ENCODE measurements at regions of chr2 and their contacts with region 1.

Region 1: GRCh38 chr2:25276569-25277465 is 64.9 kb downstream of the DNMT3A start:
- DNase-seq: peak; percentile 56 to 87 (median 68)
- ATAC-seq: peak; percentile 25
- H3K4me3 ChIP-seq: peak overlapping the region; percentile 50
- H3K4me3 Mint-ChIP-seq: peak overlapping the region; percentile 73
- H3K27ac ChIP-seq: peak overlapping the region; percentile 88 to 95
- H3K27ac Mint-ChIP-seq: peak overlapping the region; percentile 97
- H3K4me1 ChIP-seq: peaks cover 90% of the 10 kb centered on the region
- H3K4me1 Mint-ChIP-seq: peaks cover 72% of the 10 kb centered on the region
- H3K27me3 ChIP-seq: no peaks in the 10 kb centered on the region
- H3K27me3 Mint-ChIP-seq: no peaks in the 10 kb centered on the region
- CTCF ChIP-seq: peak; percentile 86

Region 2: DNA sequence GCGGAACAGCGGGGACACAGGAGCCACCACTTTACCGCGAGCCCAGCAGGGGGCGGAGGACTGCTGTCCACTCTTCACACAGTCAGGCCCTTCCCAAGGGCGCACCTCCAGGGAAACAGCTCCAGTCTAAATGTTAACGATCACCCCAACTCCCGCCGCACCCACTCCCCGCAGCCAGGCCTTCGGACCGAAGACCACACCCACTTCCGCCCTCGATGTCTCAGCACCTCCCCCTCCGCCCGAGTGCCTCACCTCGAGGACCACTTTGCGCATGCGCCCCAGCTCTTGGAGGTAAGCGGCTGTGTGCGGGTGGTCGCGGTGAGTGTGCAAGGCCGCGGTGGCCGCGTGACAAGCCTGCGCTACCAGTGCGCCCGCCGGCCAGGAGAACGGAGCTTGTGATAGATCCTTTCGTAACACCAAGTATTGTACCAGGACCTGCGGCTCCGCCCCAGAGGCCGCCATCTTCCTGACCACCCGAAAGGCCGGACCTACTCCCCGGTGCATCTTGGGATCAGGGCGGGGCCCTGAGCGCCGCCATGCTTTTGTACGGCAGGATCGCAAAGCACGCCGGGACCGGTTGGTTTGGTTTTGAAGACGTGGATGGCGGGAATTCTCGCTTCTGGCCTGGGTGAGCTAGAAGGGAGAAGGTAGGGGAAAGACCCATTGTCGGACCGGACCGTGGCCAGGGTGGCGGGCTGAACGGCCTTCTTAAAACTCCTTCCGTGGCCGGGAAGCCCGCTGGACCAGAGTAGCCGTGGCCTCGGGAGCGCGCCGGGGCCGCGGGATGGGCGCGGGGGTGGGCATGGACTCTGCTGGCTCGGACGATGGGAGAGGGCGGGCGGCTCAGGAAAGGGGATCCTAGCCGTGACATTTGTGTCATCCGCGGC is 483.7 kb before region 1 on chr2 and contains the starts of genes CENPO and PTRHD1:
- CTCF ChIA-PET with region 1: no interaction called
- POLR2A ChIA-PET with region 1: interaction called, 3 read pairs
- intact Hi-C with region 1: loop called in 1 of 2 experiments (anchors 5 kb)
- DNase-seq: peak; percentile 91 to 97 (median 93)
- ATAC-seq: peak; percentile 96
- H3K4me3 ChIP-seq: peak within 1 kb of the TSS; percentile 88
- H3K4me3 Mint-ChIP-seq: peak within 1 kb of the TSS; percentile 97
- H3K27ac ChIP-seq: peak within 1 kb of the TSS; percentile 95 to 97
- H3K27ac Mint-ChIP-seq: peak within 1 kb of the TSS; percentile 99
- H3K4me1 ChIP-seq: peaks cover 13% of the 10 kb centered on the region
- H3K4me1 Mint-ChIP-seq: peaks cover 21% of the 10 kb centered on the region
- H3K27me3 ChIP-seq: no peaks in the 10 kb centered on the region
- H3K27me3 Mint-ChIP-seq: no peaks in the 10 kb centered on the region
- CTCF ChIP-seq: peak; percentile 60
- total RNA-seq, gene CENPO: 3.4 to 3.5 TPM
- total RNA-seq, gene PTRHD1: 15.3 to 15.7 TPM

Region 3: DNA sequence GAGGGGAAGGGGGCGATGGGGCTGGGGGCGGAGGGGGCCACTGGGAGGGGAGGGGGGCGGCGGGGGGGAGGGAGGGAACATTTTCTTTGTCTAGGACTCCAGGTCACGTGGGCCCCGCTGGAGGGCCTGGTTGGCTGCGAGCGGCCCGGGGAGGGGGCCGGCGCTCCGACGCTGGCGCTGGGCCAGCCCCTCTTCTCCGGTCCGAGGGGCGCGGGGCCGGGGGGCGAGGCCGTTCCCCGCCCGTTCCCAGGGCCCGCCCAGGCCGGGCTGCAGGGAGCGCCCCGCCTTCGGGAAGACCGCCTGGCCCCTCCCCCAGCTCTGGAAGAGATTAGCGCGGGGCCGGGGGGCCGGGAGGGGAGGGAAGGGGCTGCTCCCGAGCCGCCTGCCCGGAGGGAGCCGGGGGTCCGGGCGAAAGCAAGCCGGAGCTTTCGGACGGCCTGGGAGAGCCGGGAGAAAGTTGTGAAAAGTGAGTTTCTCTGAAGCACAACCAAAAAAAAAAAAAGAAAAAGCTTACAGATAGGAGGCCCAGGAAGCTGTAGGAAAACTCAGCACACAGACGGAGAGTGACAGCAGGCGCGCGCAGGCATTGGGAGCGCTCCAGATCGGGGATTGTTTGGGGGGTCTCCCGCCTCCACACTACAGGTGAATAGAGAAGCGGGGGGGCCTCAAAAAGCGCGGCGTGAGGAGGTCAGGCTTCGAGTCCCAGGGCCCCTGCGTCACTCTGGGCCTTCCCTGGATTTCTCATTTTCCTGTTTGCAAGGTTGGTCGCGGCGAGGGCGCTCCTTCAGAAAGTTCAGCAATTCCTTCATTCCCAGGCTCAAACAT is 24.3 kb before region 1 on chr2:
- CTCF ChIA-PET with region 1: interaction called, 3 read pairs
- POLR2A ChIA-PET with region 1: interaction called, 84 read pairs
- intact Hi-C with region 1: loop called in 1 of 2 experiments (anchors 2 kb)
- DNase-seq: peak in 13 of 14 experiments; percentile 39 to 80 (median 57)
- ATAC-seq: peak; percentile 69
- H3K4me3 ChIP-seq: peak overlapping the region; percentile 80
- H3K4me3 Mint-ChIP-seq: peak overlapping the region; percentile 69
- H3K27ac ChIP-seq: peak overlapping the region; percentile 58 to 64
- H3K27ac Mint-ChIP-seq: peak overlapping the region; percentile 90
- H3K4me1 ChIP-seq: peaks cover 36% of the 10 kb centered on the region
- H3K4me1 Mint-ChIP-seq: peaks cover 47% of the 10 kb centered on the region
- H3K27me3 ChIP-seq: no peaks in the 10 kb centered on the region
- H3K27me3 Mint-ChIP-seq: no peaks in the 10 kb centered on the region
- CTCF ChIP-seq: no peak

Region 4: DNA sequence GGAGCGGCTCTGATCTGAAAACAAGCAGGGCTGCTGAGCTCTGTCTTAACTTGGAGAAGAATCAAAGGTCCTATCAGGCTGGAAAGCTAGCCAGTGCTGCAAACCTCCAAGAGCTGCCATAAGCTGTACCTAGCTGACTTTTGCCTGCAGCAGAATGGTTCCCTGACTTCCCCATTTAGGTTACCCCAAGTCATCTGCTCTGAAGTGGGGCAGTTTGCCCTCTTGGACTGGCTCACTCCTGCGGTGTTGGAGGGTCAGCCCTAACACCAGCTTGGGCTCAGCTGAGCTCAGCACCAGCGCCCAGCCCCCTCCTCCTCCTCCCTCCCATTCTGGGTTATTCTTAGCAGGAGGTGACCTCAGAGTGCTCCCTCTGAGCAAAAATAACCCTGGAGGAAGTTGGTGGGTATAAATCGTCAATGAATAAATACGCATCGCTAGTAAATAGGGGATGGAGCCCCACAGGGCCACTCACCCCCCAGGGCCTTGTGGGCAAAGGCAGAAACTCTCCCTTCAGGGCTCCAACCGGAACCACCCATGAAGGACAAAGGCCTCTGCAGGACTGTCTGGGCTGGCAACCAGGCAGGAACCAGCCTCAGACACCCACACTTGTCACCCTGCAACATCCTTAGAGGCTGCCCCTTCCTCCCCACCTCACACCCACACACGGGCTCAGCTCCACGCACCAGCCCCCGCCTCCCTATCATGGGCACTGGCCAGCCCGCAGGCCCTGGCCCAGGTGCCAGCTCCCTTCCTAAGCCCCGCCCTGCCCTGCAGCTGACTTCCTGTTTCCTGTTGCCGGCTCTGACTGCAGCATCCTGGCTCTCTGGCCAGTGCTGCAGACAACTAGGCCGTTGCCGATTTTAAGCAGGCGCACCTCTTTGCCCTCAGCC is 18.0 kb after region 1 on chr2:
- CTCF ChIA-PET with region 1: interaction called, 9 read pairs
- POLR2A ChIA-PET with region 1: interaction called, 88 read pairs
- intact Hi-C with region 1: loop called (anchors 2 kb)
- DNase-seq: peak; percentile 54 to 93 (median 76)
- ATAC-seq: peak; percentile 87
- H3K4me3 ChIP-seq: peak overlapping the region; percentile 40
- H3K4me3 Mint-ChIP-seq: peak overlapping the region; percentile 88
- H3K27ac ChIP-seq: peak overlapping the region; percentile 90 to 91
- H3K27ac Mint-ChIP-seq: peak overlapping the region; percentile 99
- H3K4me1 ChIP-seq: peaks cover 68% of the 10 kb centered on the region
- H3K4me1 Mint-ChIP-seq: peaks cover 44% of the 10 kb centered on the region
- H3K27me3 ChIP-seq: no peaks in the 10 kb centered on the region
- H3K27me3 Mint-ChIP-seq: no peaks in the 10 kb centered on the region
- CTCF ChIP-seq: no peak

Region 5: DNA sequence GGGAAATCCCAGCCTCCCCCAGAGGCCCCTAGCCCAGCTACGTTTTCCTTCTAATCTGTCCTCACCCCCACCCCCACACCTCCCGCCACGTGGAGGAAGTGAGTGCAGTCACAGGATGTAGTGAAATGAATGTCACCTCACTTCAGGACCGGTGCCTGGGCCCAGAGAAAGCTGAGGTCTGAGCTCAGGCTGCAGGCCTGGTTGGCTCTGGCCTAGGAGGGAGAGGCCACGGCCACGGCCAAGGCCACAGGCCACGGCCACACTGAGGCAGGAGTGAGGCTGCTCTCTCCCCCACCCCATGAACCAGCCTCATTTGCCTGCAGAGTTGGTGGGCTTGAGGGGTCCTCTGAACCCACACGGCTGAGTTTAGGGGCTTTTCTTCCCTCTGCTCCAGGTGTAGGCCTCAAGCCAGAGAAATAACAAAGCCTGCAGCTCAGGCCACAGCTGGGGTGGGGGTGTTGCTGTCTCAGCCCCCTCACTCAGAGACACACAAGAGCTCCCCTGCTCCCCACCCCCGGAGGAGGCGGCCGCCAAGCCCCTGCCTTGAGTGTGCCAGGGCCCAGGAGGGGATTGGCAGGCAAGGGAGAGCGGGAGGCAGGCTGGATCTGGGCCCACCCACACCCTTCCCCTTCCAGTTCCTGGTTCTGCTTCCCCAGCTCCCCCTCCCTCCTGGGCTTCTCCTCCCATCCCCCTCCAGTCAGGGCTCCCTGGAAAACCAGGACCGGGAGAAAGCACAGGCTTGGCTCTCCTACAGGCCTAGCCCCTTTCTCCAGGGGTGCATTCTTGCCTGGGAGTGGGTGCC is 37.9 kb after region 1 on chr2:
- CTCF ChIA-PET with region 1: interaction called, 8 read pairs
- POLR2A ChIA-PET with region 1: interaction called, 25 read pairs
- intact Hi-C with region 1: loop called in 1 of 2 experiments (anchors 5 kb)
- DNase-seq: peak; percentile 35 to 79 (median 61)
- ATAC-seq: peak; percentile 87
- H3K4me3 ChIP-seq: peak overlapping the region; percentile 50
- H3K4me3 Mint-ChIP-seq: peak overlapping the region; percentile 70
- H3K27ac ChIP-seq: peak overlapping the region; percentile 77 to 84
- H3K27ac Mint-ChIP-seq: peak overlapping the region; percentile 90
- H3K4me1 ChIP-seq: peaks cover 71% of the 10 kb centered on the region
- H3K4me1 Mint-ChIP-seq: peaks cover 69% of the 10 kb centered on the region
- H3K27me3 ChIP-seq: no peaks in the 10 kb centered on the region
- H3K27me3 Mint-ChIP-seq: no peaks in the 10 kb centered on the region
- CTCF ChIP-seq: no peak

Region 6: DNA sequence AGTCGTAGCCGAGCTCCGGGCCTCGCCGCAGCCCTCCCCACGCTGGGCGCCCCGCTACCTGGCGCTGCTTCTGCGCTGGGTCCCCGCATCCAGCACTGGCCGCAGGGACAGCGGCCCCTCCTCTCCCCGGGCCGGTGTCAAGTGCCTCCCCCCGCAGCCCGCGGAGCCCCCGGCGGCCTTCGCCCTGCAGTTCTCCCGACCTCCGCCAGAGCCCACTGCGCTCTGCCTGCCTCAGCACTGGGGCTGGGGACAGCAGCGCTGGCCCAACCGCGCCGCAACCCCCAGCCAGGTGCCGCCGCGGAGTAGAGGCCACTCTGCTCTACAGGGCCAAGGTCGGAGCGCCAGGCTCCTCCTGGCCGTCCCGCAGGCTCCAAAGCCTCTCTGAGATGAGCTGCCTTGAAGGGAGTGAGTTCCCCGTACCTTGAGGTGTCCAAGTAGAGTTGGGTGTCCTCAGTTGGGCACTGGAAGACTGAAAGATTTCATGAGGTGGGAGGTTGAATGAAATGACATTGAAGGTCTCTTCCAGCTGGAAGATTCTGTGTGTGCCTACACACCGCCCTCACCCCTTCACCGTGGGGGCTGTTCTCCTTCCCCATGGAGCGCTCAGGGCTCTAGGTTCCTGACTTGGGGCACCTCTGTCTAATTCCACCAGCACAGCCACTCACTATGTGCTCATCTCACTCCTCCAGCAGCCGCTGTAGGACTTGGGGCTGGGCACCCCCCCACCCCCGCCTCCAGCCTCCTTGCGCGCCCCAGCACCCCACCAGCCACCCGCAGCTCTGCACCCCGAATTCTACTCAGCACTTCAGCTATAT is 65.8 kb after region 1 on chr2:
- CTCF ChIA-PET with region 1: interaction called, 3 read pairs
- POLR2A ChIA-PET with region 1: interaction called, 23 read pairs
- intact Hi-C with region 1: loop called (anchors 2 to 10 kb)
- DNase-seq: peak; percentile 50 to 92 (median 70)
- ATAC-seq: peak; percentile 85
- H3K4me3 ChIP-seq: peak overlapping the region; percentile 34
- H3K4me3 Mint-ChIP-seq: peak overlapping the region; percentile 91
- H3K27ac ChIP-seq: no peak overlapping the region
- H3K27ac Mint-ChIP-seq: peak overlapping the region; percentile 24
- H3K4me1 ChIP-seq: peaks cover 37% of the 10 kb centered on the region
- H3K4me1 Mint-ChIP-seq: peaks cover 29% of the 10 kb centered on the region
- H3K27me3 ChIP-seq: peaks cover 0 to 2% of the 10 kb centered on the region in 2 experiments
- H3K27me3 Mint-ChIP-seq: no peaks in the 10 kb centered on the region
- CTCF ChIP-seq: peak; percentile 90

Region 7: GRCh38 chr2:25376750-25377621 is 100.2 kb after region 1 on chr2:
- CTCF ChIA-PET with region 1: interaction called, 10 read pairs
- POLR2A ChIA-PET with region 1: interaction called, 3 read pairs
- intact Hi-C with region 1: no loop called
- DNase-seq: peak; percentile 81 to 97 (median 90)
- ATAC-seq: peak; percentile 99
- H3K4me3 ChIP-seq: no peak overlapping the region
- H3K4me3 Mint-ChIP-seq: peak overlapping the region; percentile 73
- H3K27ac ChIP-seq: peak overlapping the region; percentile 48 to 80
- H3K27ac Mint-ChIP-seq: peak overlapping the region; percentile 98
- H3K4me1 ChIP-seq: peaks cover 40% of the 10 kb centered on the region
- H3K4me1 Mint-ChIP-seq: peaks cover 43% of the 10 kb centered on the region
- H3K27me3 ChIP-seq: no peaks in the 10 kb centered on the region
- H3K27me3 Mint-ChIP-seq: no peaks in the 10 kb centered on the region
- CTCF ChIP-seq: peak; percentile 97

Region 8: DNA sequence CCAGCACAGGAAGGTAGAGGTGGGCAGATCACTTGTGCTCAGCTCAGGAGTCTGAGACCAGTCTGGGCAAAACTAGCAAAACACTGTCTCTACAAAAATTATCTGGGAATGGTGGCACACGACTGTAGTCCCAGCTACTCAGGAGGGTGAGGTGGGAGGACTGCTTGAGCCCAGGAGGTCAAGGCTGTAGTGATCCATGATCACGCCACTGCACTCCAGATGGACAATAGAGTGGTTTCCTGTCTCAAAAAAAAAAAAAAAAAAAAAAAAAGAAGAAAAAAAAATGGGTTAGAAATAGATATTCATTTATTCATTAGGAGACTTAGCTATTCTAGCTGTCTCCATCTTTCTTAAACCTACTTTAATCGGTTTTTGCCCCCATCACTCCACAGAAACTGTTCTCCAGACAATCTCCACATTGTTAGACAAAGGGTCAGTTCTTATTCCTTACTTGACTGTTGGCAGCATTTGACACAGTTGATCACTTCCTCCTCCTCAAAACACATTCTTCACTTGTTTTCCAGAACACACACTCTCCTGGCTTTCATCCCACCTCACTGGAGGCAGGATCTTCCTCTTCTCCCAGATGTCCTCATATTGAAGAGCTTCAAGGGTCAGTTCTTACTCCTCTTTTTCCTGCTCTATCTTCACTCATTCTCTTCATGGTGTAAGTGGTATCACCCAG is 293.5 kb after region 1 on chr2:
- CTCF ChIA-PET with region 1: no interaction called
- POLR2A ChIA-PET with region 1: no interaction called
- intact Hi-C with region 1: no loop called
- DNase-seq: no peak
- ATAC-seq: no peak
- H3K4me3 ChIP-seq: no peak overlapping the region
- H3K4me3 Mint-ChIP-seq: no peak overlapping the region
- H3K27ac ChIP-seq: no peak overlapping the region
- H3K27ac Mint-ChIP-seq: no peak overlapping the region
- H3K4me1 ChIP-seq: no peaks in the 10 kb centered on the region
- H3K4me1 Mint-ChIP-seq: no peaks in the 10 kb centered on the region
- H3K27me3 ChIP-seq: no peaks in the 10 kb centered on the region
- H3K27me3 Mint-ChIP-seq: no peaks in the 10 kb centered on the region
- CTCF ChIP-seq: no peak

Measured in CD4-positive, alpha-beta T cell (primary cell).